Gastrocnemius medialis (tissue), 4 donors: ENCODE measurements at regions of chr12 and their contacts with region 1.

Region 1: GRCh38 chr12:101570047-101570446 is 24.7 kb upstream of the MYBPC1 start:
- DNase-seq: no peak
- ATAC-seq: peak; percentile 27 to 60
- H3K4me3 ChIP-seq: peak overlapping the region; percentile 3 to 46 (median 12)
- H3K27ac ChIP-seq: peak overlapping the region; percentile 84 to 94 (median 89)
- H3K4me1 ChIP-seq: peaks cover 39 to 46% of the 10 kb centered on the region in 2 donors
- H3K27me3 ChIP-seq: no peaks in the 10 kb centered on the region
- CTCF ChIP-seq: peak; percentile 15 to 47 (median 33)
- POLR2A ChIP-seq: no peak

Region 2: DNA sequence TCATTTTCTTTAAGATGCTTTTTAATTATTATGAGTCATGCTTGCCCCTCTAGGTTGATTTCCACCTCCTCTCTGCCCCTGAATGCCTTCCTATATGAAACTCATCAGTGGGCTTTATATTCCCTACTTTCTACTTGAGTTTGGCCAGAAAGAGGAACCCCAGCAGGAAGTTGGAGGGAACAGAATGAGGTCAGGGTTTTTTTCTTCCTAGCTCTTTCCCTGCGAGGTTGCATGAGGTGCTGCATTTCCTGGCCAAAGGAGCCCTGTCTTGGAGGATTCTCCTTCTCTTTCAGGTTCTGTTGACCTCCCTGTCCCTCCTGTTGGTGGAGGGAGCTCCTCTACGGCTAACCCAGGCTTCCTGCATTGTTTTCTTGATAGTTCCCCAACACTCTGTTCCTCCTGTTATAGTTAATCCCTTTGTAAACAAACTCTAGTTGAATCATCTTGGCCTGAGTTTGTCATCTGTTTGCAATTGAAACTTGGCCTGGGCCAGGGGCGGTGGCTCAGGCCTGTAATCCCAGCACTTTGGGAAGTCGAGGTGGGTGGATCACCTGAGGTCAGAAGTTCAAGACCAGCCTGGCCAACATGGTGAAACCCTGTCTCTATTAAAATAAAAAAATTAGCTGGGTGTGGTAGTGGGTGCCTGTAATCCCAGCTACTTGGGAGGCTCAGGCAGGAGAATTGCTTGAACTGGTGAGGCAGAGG is 110.3 kb before region 1 on chr12:
- in situ Hi-C with region 1: no loop called
- intact Hi-C with region 1: no loop called
- DNase-seq: peak in 1 of 2 donors; percentile 25
- ATAC-seq: peak; percentile 36 to 73
- H3K4me3 ChIP-seq: no peak overlapping the region
- H3K27ac ChIP-seq: no peak overlapping the region
- H3K4me1 ChIP-seq: peaks cover 0 to 5% of the 10 kb centered on the region in 2 donors
- H3K27me3 ChIP-seq: no peaks in the 10 kb centered on the region
- CTCF ChIP-seq: no peak
- POLR2A ChIP-seq: no peak

Region 3: DNA sequence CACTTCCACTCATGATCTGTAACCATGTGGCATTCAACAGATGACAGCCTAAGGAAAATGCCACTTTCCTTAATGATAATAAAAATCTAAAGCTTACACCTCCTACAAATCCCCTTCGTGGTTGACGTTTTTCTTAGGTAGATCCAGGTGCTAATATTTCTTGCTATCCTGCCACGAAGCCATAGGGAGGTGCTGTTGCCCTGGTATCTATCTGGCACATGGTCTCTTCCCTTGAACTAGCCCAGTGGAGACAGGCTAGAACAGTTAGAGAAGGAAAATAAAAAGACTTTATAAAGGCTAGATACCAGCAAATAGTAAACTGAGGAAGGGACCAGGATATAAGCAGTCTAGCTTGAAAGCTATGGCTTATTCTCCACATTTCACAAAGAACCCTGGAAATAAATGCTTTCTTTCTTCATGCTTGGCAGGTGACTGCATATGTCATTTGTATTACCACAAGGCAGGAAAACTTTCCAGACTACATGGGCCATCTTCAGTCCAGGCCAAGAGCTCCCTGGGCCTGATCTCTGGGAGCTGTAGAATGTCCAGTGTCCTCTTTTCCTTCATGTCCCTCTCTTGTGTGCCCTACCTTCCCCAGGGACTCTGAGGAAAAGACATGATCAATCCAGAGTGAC is 79.6 kb before region 1 on chr12:
- in situ Hi-C with region 1: no loop called
- intact Hi-C with region 1: loop called (anchors 2 kb)
- DNase-seq: peak; percentile 42 to 61
- ATAC-seq: peak; percentile 89 to 98
- H3K4me3 ChIP-seq: no peak overlapping the region
- H3K27ac ChIP-seq: peak overlapping the region; percentile 73 to 83 (median 80)
- H3K4me1 ChIP-seq: peaks cover 14 to 16% of the 10 kb centered on the region in 2 donors
- H3K27me3 ChIP-seq: no peaks in the 10 kb centered on the region
- CTCF ChIP-seq: peak; percentile 53 to 77 (median 66)
- POLR2A ChIP-seq: no peak

Region 4: GRCh38 chr12:101552277-101552676 is 17.8 kb before region 1 on chr12:
- in situ Hi-C with region 1: no loop called
- intact Hi-C with region 1: loop called (anchors 1 kb)
- DNase-seq: peak; percentile 80 to 90
- ATAC-seq: peak; percentile 99 to 100
- H3K4me3 ChIP-seq: no peak overlapping the region
- H3K27ac ChIP-seq: peak overlapping the region; percentile 86 to 93 (median 90)
- H3K4me1 ChIP-seq: peaks cover 23 to 36% of the 10 kb centered on the region in 2 donors
- H3K27me3 ChIP-seq: no peaks in the 10 kb centered on the region
- CTCF ChIP-seq: no peak
- POLR2A ChIP-seq: no peak

Region 5: DNA sequence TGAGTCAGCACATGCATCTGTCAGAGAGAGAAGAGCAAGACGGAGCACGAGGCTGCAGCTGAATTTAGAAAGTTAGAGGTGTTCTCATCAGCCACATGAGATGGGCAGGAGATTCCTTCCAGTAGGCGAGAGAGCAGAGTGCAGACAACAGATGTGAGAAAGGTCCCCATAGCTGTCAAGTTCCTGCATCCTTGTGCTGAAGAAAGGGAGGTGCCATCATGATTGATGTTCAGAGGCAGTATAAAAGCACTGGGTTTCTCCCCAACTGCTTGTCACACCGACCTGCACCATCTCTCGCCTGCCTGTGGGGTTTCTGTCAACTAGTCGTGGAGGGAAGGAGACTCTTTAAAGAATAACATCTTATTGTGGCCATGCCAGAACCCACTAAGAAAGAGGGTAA is 24.7 kb after region 1 on chr12 and contains the start of gene MYBPC1:
- in situ Hi-C with region 1: no loop called
- intact Hi-C with region 1: loop called (anchors 1 kb)
- DNase-seq: peak; percentile 86 to 93
- ATAC-seq: peak; percentile 89 to 90
- H3K4me3 ChIP-seq: peak within 1 kb of the TSS; percentile 48 to 64 (median 52)
- H3K27ac ChIP-seq: peak within 1 kb of the TSS; percentile 85 to 93 (median 92)
- H3K4me1 ChIP-seq: peaks cover 24 to 28% of the 10 kb centered on the region in 2 donors
- H3K27me3 ChIP-seq: no peaks in the 10 kb centered on the region
- CTCF ChIP-seq: peak; percentile 55 to 87 (median 73)
- POLR2A ChIP-seq: peak; percentile 87 to 97
- total RNA-seq, gene MYBPC1: 2,958 to 5,874 (median 4,932) TPM

Region 6: GRCh38 chr12:101607902-101608742 is 38.1 kb after region 1 on chr12:
- in situ Hi-C with region 1: no loop called
- intact Hi-C with region 1: loop called (anchors 1 kb)
- DNase-seq: peak; percentile 66
- ATAC-seq: peak; percentile 37 to 40
- H3K4me3 ChIP-seq: peak overlapping the region; percentile 3 to 32 (median 16)
- H3K27ac ChIP-seq: peak overlapping the region; percentile 85 to 93 (median 92)
- H3K4me1 ChIP-seq: peaks cover 66 to 81% of the 10 kb centered on the region in 2 donors
- H3K27me3 ChIP-seq: no peaks in the 10 kb centered on the region
- CTCF ChIP-seq: no peak
- POLR2A ChIP-seq: peak in 1 of 2 donors; percentile 30

Region 7: GRCh38 chr12:101697197-101697929 is 127.3 kb after region 1 on chr12 and contains the start of gene CHPT1:
- in situ Hi-C with region 1: no loop called
- intact Hi-C with region 1: loop called (anchors 2 kb)
- DNase-seq: peak; percentile 79 to 90
- ATAC-seq: peak; percentile 51 to 52
- H3K4me3 ChIP-seq: peak within 1 kb of the TSS; percentile 72 to 94 (median 84)
- H3K27ac ChIP-seq: peak within 1 kb of the TSS; percentile 96 to 98 (median 96)
- H3K4me1 ChIP-seq: peaks cover 41 to 44% of the 10 kb centered on the region in 2 donors
- H3K27me3 ChIP-seq: no peaks in the 10 kb centered on the region
- CTCF ChIP-seq: no peak
- POLR2A ChIP-seq: peak; percentile 19 to 47
- total RNA-seq, gene CHPT1: 32.3 to 67.3 (median 36.1) TPM

Region 8: DNA sequence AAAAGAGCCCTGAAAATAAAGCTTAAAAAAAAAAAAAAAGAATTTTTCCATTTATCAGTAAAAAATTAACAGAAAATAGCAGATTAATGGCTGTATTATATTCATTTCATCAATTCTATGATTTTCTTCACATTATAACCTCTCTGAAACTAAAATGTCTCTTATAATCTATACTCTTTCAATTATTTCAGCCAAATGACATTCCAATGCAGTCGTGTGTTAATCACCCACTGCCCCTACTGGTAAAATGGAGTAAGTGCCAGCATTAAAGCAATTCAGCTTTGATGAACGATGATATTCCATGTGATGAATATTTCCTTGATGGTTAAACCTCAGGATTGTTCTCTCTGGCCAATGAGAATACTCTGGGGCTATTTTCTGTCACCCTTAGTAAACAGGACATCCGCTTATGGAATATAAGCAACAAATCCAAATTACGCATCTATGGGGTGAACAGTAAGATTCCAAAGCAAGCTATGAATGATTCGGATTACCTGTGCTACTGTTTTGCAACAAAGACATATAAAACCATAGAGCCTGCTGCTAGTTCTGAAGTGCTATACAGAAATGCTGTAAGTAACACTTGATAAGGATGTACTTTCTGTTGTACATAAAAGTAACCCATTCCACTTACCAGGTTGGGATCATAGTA is 189.5 kb after region 1 on chr12:
- in situ Hi-C with region 1: no loop called
- intact Hi-C with region 1: loop called (anchors 5 kb)
- DNase-seq: no peak
- ATAC-seq: peak in 1 of 2 donors; percentile 35
- H3K4me3 ChIP-seq: no peak overlapping the region
- H3K27ac ChIP-seq: no peak overlapping the region
- H3K4me1 ChIP-seq: no peaks in the 10 kb centered on the region
- H3K27me3 ChIP-seq: no peaks in the 10 kb centered on the region
- CTCF ChIP-seq: peak; percentile 30 to 64 (median 47)
- POLR2A ChIP-seq: no peak